ENCODE measurements at regions of chr1 and their contacts with region 1.

Region 1: GRCh38 chr1:160877221-160877620 is 7.8 kb downstream of the ITLN1 start:
- DNase-seq: peak in 4 of 14 experiments; percentile 15 to 71 (median 70)
- ATAC-seq: peak; percentile 84
- H3K4me3 ChIP-seq: no peak overlapping the region
- H3K4me3 Mint-ChIP-seq: no peak overlapping the region
- H3K27ac ChIP-seq: no peak overlapping the region
- H3K27ac Mint-ChIP-seq: no peak overlapping the region
- H3K4me1 ChIP-seq: peaks cover 12% of the 10 kb centered on the region
- H3K4me1 Mint-ChIP-seq: peaks cover 13% of the 10 kb centered on the region
- H3K27me3 ChIP-seq: no peaks in the 10 kb centered on the region
- H3K27me3 Mint-ChIP-seq: no peaks in the 10 kb centered on the region
- CTCF ChIP-seq: peak; percentile 63

Region 2: GRCh38 chr1:160404094-160404493 is 473.1 kb before region 1 on chr1:
- CTCF ChIA-PET with region 1: no interaction called
- POLR2A ChIA-PET with region 1: no interaction called
- intact Hi-C with region 1: no loop called
- DNase-seq: no peak
- ATAC-seq: no peak
- H3K4me3 ChIP-seq: no peak overlapping the region
- H3K4me3 Mint-ChIP-seq: no peak overlapping the region
- H3K27ac ChIP-seq: no peak overlapping the region
- H3K27ac Mint-ChIP-seq: no peak overlapping the region
- H3K4me1 ChIP-seq: peaks cover 15% of the 10 kb centered on the region
- H3K4me1 Mint-ChIP-seq: peaks cover 9% of the 10 kb centered on the region
- H3K27me3 ChIP-seq: peaks cover 17 to 26% of the 10 kb centered on the region in 2 experiments
- H3K27me3 Mint-ChIP-seq: peaks cover 27% of the 10 kb centered on the region
- CTCF ChIP-seq: no peak

Region 3: GRCh38 chr1:160951443-160952128 is 74.4 kb after region 1 on chr1:
- CTCF ChIA-PET with region 1: no interaction called
- POLR2A ChIA-PET with region 1: no interaction called
- intact Hi-C with region 1: loop called in 1 of 2 experiments (anchors 2 kb)
- DNase-seq: peak; percentile 52 to 84 (median 66)
- ATAC-seq: peak; percentile 91
- H3K4me3 ChIP-seq: no peak overlapping the region
- H3K4me3 Mint-ChIP-seq: no peak overlapping the region
- H3K27ac ChIP-seq: no peak overlapping the region
- H3K27ac Mint-ChIP-seq: no peak overlapping the region
- H3K4me1 ChIP-seq: peaks cover 10% of the 10 kb centered on the region
- H3K4me1 Mint-ChIP-seq: peaks cover 12% of the 10 kb centered on the region
- H3K27me3 ChIP-seq: no peaks in the 10 kb centered on the region
- H3K27me3 Mint-ChIP-seq: no peaks in the 10 kb centered on the region
- CTCF ChIP-seq: peak; percentile 68

Measured in CD4-positive, alpha-beta T cell (primary cell).